ENCODE measurements at regions of chr7 and their contacts with region 1.

Region 1: DNA sequence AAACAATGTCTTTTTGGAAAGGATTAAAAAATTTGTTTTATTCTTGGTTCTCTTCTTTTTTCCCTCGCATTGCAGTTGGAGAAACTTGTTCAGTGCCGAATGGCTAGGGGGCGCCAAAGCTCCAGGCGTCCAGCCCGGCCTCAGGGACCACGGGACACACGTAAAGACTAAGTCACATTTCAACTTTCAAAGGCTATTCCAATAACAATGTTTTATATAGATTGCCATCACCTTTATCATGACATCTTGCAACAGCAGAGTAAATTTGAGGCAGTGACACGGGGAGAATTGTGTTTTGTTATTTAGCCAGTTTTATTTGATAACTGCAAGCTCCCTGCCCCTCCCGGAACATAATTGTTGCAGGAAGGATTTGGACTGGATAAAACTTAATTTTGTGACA is 2.2 kb upstream of the IGFBP3 start:
- DNase-seq: no peak
- H3K4me3 ChIP-seq: no peak overlapping the region
- H3K27ac ChIP-seq: no peak overlapping the region
- H3K27me3 ChIP-seq: no peaks in the 10 kb centered on the region
- CTCF ChIP-seq: peak; percentile 99

Region 2: GRCh38 chr7:45890902-45891461 is 32.3 kb before region 1 on chr7:
- CTCF ChIA-PET with region 1: interaction called, 18 read pairs
- POLR2A ChIA-PET with region 1: interaction called, 3 read pairs
- DNase-seq: no peak
- H3K4me3 ChIP-seq: no peak overlapping the region
- H3K27ac ChIP-seq: no peak overlapping the region
- H3K27me3 ChIP-seq: peaks cover 13% of the 10 kb centered on the region
- CTCF ChIP-seq: peak; percentile 71

Region 3: DNA sequence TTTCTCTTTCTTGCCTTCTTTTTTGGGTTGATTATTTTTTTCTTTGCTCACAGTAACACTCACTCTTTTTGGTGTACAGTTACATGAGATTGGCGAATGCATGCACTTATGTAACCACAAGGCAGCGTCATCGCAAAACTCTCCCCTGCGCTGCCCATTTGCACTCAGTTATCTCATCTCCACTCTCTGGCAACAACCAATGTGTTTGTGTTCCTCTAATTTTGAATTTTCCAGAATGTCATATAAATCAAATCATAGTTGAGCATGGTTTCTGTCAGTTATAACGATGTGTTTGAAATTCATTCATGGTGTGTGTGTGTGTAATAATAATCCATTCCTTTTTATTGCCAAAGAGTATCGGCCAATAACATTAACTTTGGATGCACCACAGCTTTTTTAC is 20.8 kb after region 1 on chr7:
- CTCF ChIA-PET with region 1: no interaction called
- POLR2A ChIA-PET with region 1: no interaction called
- DNase-seq: no peak
- H3K4me3 ChIP-seq: no peak overlapping the region
- H3K27ac ChIP-seq: no peak overlapping the region
- H3K27me3 ChIP-seq: no peaks in the 10 kb centered on the region
- CTCF ChIP-seq: no peak

Region 4: GRCh38 chr7:46131916-46132795 is 208.9 kb after region 1 on chr7:
- CTCF ChIA-PET with region 1: interaction called, 20 read pairs
- POLR2A ChIA-PET with region 1: interaction called, 4 read pairs
- DNase-seq: no peak
- H3K4me3 ChIP-seq: no peak overlapping the region
- H3K27ac ChIP-seq: no peak overlapping the region
- H3K27me3 ChIP-seq: no peaks in the 10 kb centered on the region
- CTCF ChIP-seq: peak; percentile 49

Region 5: DNA sequence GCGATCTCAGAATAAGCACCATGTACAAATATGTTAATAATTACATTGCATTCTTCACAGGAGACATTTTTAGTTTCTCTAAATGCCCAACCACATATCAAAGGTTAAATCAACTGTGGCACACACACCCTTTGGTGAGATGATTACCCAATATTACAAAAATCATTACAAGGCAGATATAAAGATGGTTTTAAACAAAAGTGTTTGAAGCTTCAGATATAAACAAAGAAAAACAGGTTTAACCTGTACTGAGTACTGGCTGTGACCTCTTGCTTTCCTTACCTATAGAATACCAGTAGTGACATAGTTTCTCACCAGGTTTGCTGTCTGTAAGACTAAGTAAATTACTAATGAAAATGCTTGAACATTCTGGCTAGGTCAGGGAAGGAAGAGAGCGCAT is 357.8 kb after region 1 on chr7:
- CTCF ChIA-PET with region 1: interaction called, 19 read pairs
- POLR2A ChIA-PET with region 1: no interaction called
- DNase-seq: no peak
- H3K4me3 ChIP-seq: no peak overlapping the region
- H3K27ac ChIP-seq: no peak overlapping the region
- H3K27me3 ChIP-seq: no peaks in the 10 kb centered on the region
- CTCF ChIP-seq: no peak

Region 6: DNA sequence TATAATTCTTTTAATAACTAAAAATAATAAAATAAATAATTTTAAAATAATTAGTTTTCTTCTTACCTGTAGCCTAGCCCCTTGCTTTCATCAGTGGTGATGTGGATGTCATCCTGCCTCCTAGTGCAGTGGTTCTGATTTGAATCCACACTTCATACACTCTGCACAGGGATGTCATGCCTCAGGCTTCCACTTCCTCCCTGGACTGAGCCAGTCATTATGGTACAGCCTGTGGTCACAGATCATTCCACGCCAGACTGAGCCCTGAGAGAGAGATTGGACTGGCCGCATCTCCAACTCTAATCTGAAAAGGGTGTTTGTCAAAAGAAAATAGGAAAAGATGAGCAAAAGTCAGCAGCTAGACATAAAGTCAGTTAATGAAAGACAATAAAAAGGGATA is 434.0 kb after region 1 on chr7:
- CTCF ChIA-PET with region 1: interaction called, 167 read pairs
- POLR2A ChIA-PET with region 1: no interaction called
- DNase-seq: no peak
- H3K4me3 ChIP-seq: no peak overlapping the region
- H3K27ac ChIP-seq: no peak overlapping the region
- H3K27me3 ChIP-seq: no peaks in the 10 kb centered on the region
- CTCF ChIP-seq: no peak

Region 7: GRCh38 chr7:46933596-46933995 is 1010.3 kb after region 1 on chr7:
- CTCF ChIA-PET with region 1: interaction called, 11 read pairs
- POLR2A ChIA-PET with region 1: no interaction called
- DNase-seq: no peak
- H3K4me3 ChIP-seq: no peak overlapping the region
- H3K27ac ChIP-seq: no peak overlapping the region
- H3K27me3 ChIP-seq: no peaks in the 10 kb centered on the region
- CTCF ChIP-seq: no peak

Region 8: DNA sequence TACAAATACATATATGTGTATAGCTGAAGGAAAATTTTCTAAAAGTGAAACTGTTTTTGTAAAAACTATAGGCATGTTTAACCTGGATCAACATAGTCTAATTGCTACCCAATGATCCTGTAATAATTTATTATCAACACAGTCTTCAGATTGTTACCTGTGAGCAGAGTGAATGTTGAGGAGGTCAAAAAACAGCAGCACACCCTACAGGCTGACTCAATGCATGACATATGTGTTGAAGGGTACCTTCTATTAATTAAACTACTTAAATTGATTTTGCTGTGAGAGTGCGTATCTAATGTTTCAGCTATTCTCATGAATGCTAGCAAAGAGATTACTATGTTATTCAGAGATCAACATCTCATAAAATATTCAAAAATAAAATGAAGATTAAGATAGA is 1247.2 kb after region 1 on chr7:
- CTCF ChIA-PET with region 1: interaction called, 11 read pairs
- POLR2A ChIA-PET with region 1: no interaction called
- DNase-seq: no peak
- H3K4me3 ChIP-seq: no peak overlapping the region
- H3K27ac ChIP-seq: no peak overlapping the region
- H3K27me3 ChIP-seq: no peaks in the 10 kb centered on the region
- CTCF ChIP-seq: peak; percentile 41; the same call in 1 of the 2 replicates

Measured in AG04450 (cell line).